Cardiac septum (tissue), 1 donor: ENCODE measurements at regions of chr16 and their contacts with region 1.

Region 1: GRCh38 chr16:78503602-78504001 is 404.1 kb downstream of the WWOX start:
- DNase-seq: no peak

Region 2: GRCh38 chr16:78122774-78123315 is 380.8 kb before region 1 on chr16:
- intact Hi-C with region 1: loop called (anchors 10 kb)
- DNase-seq: no peak

Region 3: GRCh38 chr16:78684040-78684611 is 180.5 kb after region 1 on chr16:
- intact Hi-C with region 1: loop called (anchors 5 kb)
- DNase-seq: no peak

Region 4: DNA sequence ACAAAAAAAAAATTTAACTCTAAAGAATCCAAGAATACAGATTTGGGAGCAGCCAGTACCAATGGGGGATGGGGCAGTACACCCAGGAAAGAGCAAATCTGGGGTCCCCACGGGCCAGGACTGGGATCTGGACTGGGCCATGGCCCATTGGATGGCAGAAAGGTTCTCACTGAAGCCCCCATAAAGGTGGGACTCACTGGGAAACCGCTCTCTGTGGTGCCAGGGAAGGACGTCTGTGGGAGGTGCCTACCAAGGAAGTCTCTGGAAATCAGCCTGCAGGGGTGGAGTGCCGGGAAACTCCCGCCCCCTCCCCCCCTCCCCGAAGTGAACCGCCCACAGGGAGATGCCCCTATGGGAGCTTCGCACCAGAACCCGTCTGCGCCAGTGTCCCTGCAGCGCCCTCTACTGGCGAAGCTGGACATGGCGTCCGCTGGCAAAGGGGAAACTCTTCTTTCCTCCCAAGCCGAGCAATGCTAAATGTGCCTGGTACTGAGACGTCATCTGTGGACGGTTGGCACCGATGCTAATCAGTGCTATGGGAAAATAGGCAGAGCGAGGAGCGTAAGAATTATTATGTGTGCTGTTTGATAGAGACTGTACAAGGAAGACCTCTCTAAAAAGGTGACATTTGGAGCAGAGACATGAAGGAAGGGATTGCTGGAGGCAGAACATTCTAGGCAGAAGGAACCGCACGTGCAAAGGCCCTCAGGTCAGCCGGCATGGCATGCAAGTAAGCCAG is 266.9 kb after region 1 on chr16:
- intact Hi-C with region 1: loop called (anchors 1 kb)
- DNase-seq: peak; percentile 82

Region 5: GRCh38 chr16:79601931-79602627 is 1098.5 kb after region 1 on chr16:
- intact Hi-C with region 1: loop called (anchors 2 kb)
- DNase-seq: peak; percentile 80